Activated T-helper 1 cell treated with anti-CD3 and anti-CD28 coated beads, Interleukin-12 subunit alpha, Interleukin-12 subunit beta, Interleukin-2, Interleukin-4 antibody, amounts not matched to agents 30 ng/mL and 10 ng/mL and 1 ng/mL, durations not matched to agents 14 hours and 24 hours and 36 hours (primary cell): ENCODE measurements at regions of chr1 and their contacts with region 1.

Region 1: DNA sequence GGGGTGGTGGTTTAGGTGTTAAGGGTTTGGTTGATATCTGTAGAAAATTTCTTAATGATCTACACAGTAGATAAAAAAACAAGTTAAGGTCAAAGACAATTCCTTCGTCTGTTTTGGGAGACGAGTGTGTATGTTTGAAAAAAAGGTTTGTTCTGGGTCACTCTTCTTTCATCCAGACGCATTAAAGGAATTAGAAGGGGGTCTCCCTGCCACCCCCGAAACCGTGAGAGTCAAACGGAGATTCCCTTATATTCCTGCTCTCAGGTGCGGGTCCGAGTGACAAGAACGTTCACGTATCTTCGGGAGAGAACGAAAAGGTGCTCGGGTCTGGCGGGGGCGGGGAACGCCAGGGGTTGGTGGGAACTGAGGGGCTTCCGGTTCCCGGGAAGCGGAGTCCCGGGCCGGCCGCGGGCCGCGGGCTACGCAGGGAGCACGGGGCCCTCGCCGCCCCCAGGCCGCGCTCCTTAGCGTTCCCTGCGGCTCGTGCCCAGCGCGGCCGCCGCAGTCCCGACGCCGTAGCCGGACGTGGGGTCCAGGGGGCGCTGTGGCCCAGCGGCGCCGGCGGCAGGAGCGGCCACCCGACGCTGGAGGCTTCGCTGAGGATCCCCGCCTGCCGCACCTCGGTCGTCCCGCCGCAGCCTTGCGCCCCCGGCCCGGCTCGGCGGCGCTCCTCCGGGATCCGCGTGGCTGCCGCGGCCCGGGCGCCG is at the start of gene ZFYVE9:
- DNase-seq: peak; percentile 60
- H3K4me3 Mint-ChIP-seq: peak within 1 kb of the TSS; percentile 80
- H3K27ac Mint-ChIP-seq: peak within 1 kb of the TSS; percentile 67
- H3K4me1 Mint-ChIP-seq: peaks cover 34% of the 10 kb centered on the region
- H3K27me3 Mint-ChIP-seq: peaks cover 46% of the 10 kb centered on the region
- total RNA-seq, gene ZFYVE9: 3.2 and 4.1 TPM in 2 replicates

Region 2: DNA sequence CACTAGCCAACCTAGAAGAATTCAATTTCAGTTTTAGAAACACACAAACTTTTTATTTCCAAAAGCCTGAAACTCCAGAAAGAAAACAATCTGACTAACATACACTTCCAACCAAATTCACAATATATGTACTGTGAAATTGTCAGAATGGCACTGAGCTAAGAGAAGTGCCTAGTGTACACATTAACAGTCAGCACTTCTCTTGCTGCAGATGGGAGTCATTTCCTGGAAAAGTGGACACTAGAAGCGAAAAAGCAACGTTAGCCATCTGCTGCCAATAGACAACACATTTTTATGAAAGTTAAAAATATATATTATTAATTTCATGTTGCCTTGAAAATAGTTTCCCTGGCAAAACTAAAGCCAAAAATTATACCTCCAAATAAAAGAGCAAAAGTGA is 688.7 kb before region 1 on chr1:
- intact Hi-C with region 1: no loop called
- DNase-seq: no peak
- H3K4me3 Mint-ChIP-seq: no peak overlapping the region
- H3K27ac Mint-ChIP-seq: no peak overlapping the region
- H3K4me1 Mint-ChIP-seq: no peaks in the 10 kb centered on the region
- H3K27me3 Mint-ChIP-seq: no peaks in the 10 kb centered on the region

Region 3: GRCh38 chr1:52033190-52034049 is 108.2 kb before region 1 on chr1 and contains the start of gene KTI12:
- intact Hi-C with region 1: loop called (anchors 1 kb)
- DNase-seq: peak; percentile 84
- H3K4me3 Mint-ChIP-seq: peak within 1 kb of the TSS; percentile 93
- H3K27ac Mint-ChIP-seq: peak within 1 kb of the TSS; percentile 89
- H3K4me1 Mint-ChIP-seq: peaks cover 39% of the 10 kb centered on the region
- H3K27me3 Mint-ChIP-seq: no peaks in the 10 kb centered on the region
- total RNA-seq, gene KTI12: 21.6 and 22.4 TPM in 2 replicates

Region 4: GRCh38 chr1:52102336-52103013 is 39.2 kb before region 1 on chr1:
- intact Hi-C with region 1: loop called (anchors 1 kb)
- DNase-seq: no peak
- H3K4me3 Mint-ChIP-seq: no peak overlapping the region
- H3K27ac Mint-ChIP-seq: no peak overlapping the region
- H3K4me1 Mint-ChIP-seq: peaks cover 14% of the 10 kb centered on the region
- H3K27me3 Mint-ChIP-seq: peaks cover 5% of the 10 kb centered on the region

Region 5: DNA sequence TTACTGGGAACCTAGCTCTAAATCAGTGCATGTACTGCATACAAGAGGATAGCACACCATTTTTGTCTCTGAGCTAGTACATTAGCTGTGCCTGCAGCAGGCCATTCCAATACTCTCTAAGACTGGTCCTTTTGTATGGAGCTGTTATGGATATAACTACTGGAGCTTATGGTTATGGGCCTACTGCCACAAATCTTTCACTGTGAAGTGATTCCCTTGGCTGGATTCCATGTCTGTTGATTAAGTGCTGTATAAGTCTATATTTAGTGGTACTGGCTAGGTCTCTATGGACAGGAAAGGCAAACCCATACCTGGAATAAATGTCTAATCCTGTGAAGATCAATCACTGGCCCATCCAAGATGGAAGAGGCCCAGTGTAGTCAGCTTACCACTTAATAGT is 12.2 kb after region 1 on chr1:
- intact Hi-C with region 1: no loop called
- DNase-seq: no peak
- H3K4me3 Mint-ChIP-seq: no peak overlapping the region
- H3K27ac Mint-ChIP-seq: no peak overlapping the region
- H3K4me1 Mint-ChIP-seq: no peaks in the 10 kb centered on the region
- H3K27me3 Mint-ChIP-seq: peaks cover 3% of the 10 kb centered on the region

Region 6: DNA sequence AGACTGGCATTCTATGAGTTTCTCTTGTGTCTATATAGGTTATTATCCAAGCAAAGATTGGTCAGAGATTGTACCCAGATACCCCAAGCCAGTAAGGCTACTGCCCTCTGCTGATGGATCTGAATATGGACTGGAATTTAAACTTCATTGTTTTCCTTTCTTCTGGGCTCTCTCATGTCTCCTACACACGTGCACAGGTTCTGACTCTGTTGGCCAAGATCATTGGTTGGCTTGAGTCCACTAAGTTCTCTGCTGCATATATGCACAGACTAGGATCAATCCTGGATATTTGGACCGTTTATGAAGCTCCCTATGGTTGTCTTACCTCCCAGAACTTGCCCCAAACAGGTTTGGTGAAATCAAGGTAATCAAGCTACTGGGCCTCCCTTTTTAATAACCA is 154.7 kb after region 1 on chr1:
- intact Hi-C with region 1: loop called (anchors 1 kb)
- DNase-seq: no peak
- H3K4me3 Mint-ChIP-seq: no peak overlapping the region
- H3K27ac Mint-ChIP-seq: no peak overlapping the region
- H3K4me1 Mint-ChIP-seq: no peaks in the 10 kb centered on the region
- H3K27me3 Mint-ChIP-seq: peaks cover 8% of the 10 kb centered on the region